ENCODE measurements at regions of chr10 and their contacts with region 1.

Region 1: DNA sequence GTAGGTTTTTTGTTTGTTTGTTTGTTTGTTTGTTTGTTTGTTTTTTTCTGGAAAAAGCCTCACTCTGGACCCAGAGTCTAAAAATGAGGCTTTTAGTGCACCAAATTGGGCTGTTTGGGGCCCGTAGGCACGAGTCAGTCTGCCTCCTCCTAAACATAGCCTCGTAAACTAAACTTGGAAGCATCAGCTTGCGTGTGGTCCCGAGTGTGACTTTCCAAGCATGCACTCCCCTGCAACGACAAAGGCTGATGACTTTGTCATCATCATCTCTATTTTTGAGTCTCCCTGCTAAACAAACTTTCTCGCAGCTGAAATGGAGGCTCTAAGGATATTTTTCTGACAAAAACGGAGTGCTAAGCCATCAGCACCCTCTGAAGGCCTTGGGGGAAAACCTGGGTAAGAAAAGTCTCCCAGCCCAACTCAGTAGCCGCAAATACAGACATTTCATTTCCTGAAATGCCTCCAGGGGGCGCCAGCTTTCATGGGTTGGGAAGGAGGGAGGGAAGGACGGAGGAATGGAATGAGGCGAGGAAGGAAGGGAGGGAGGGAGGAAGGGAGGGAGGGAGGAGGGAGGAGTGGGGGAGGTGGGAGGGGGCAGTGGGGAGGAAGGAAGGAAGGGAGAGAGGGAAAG is 245.9 kb downstream of the KCNMA1 start:
- DNase-seq: peak; percentile 79 to 81
- H3K4me3 ChIP-seq: no peak overlapping the region
- H3K4me3 Mint-ChIP-seq: no peak overlapping the region
- H3K27ac Mint-ChIP-seq: no peak overlapping the region
- H3K4me1 ChIP-seq: peaks cover 50% of the 10 kb centered on the region
- H3K4me1 Mint-ChIP-seq: peaks cover 40% of the 10 kb centered on the region
- H3K27me3 ChIP-seq: no peaks in the 10 kb centered on the region
- H3K27me3 Mint-ChIP-seq: no peaks in the 10 kb centered on the region
- CTCF ChIP-seq: peak; percentile 42 to 65

Region 2: GRCh38 chr10:77452952-77453564 is 61.3 kb after region 1 on chr10:
- CTCF ChIA-PET with region 1: no interaction called
- POLR2A ChIA-PET with region 1: no interaction called
- intact Hi-C with region 1: loop called (anchors 1 kb)
- DNase-seq: peak; percentile 51 to 58
- H3K4me3 ChIP-seq: no peak overlapping the region
- H3K4me3 Mint-ChIP-seq: no peak overlapping the region
- H3K27ac Mint-ChIP-seq: peak overlapping the region; percentile 59
- H3K4me1 ChIP-seq: peaks cover 37% of the 10 kb centered on the region
- H3K4me1 Mint-ChIP-seq: peaks cover 49% of the 10 kb centered on the region
- H3K27me3 ChIP-seq: no peaks in the 10 kb centered on the region
- H3K27me3 Mint-ChIP-seq: no peaks in the 10 kb centered on the region
- CTCF ChIP-seq: no peak

Region 3: GRCh38 chr10:77586719-77587415 is 195.1 kb after region 1 on chr10:
- CTCF ChIA-PET with region 1: no interaction called
- POLR2A ChIA-PET with region 1: no interaction called
- intact Hi-C with region 1: loop called (anchors 5 kb)
- DNase-seq: peak in 1 of 2 experiments; percentile 58
- H3K4me3 ChIP-seq: no peak overlapping the region
- H3K4me3 Mint-ChIP-seq: no peak overlapping the region
- H3K27ac Mint-ChIP-seq: peak overlapping the region; percentile 73
- H3K4me1 ChIP-seq: peaks cover 22% of the 10 kb centered on the region; the same call in 1 of the 2 replicates
- H3K4me1 Mint-ChIP-seq: peaks cover 10% of the 10 kb centered on the region
- H3K27me3 ChIP-seq: no peaks in the 10 kb centered on the region
- H3K27me3 Mint-ChIP-seq: no peaks in the 10 kb centered on the region
- CTCF ChIP-seq: peak in 1 of 2 experiments; percentile 17

Measured in Caco-2 (cell line).